Vagina (tissue), 2 donors: ENCODE measurements at regions of chr21 and their contacts with region 1.

Region 1: GRCh38 chr21:38355992-38356797 is 99.4 kb downstream of the KCNJ15 start:
- DNase-seq: peak; percentile 64 to 83
- H3K4me3 ChIP-seq: no peak overlapping the region
- H3K27ac ChIP-seq: no peak overlapping the region
- H3K4me1 ChIP-seq: no peaks in the 10 kb centered on the region
- H3K27me3 ChIP-seq: no peaks in the 10 kb centered on the region
- CTCF ChIP-seq: peak; percentile 86 to 90 (median 88)
- POLR2A ChIP-seq: no peak

Region 2: GRCh38 chr21:38159355-38159754 is 196.8 kb before region 1 on chr21:
- intact Hi-C with region 1: loop called (anchors 10 kb)
- DNase-seq: no peak
- H3K4me3 ChIP-seq: no peak overlapping the region
- H3K27ac ChIP-seq: no peak overlapping the region
- H3K4me1 ChIP-seq: no peaks in the 10 kb centered on the region
- H3K27me3 ChIP-seq: no peaks in the 10 kb centered on the region
- CTCF ChIP-seq: peak in 1 of 3 experiments; percentile 50
- POLR2A ChIP-seq: no peak

Region 3: DNA sequence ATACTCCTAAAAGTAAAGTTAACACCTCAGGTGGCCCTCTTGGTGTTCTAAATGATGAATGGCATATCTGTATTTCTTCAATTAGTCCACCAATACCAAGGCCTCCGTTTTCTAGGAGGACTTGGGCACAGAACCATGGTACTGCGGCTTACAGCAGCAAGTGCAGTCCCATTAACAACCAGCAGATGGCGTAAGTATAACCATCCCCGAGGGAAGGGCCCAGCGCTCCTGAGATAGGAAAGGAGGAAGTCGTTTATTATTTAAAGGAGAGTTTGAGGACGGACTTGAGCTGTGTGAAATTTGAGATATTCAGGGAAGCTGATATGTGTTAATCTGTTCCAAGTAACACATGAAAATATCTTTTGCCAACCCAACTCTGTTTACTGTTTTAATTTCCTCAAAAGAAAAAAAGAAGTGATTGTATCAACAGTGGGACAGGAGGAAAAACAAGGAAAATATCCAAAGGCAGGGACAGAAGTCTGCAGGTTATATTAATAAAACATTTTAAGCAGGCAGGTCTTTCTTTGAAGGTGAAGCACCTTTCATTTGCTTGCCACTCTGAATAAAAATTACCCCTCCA is 137.1 kb before region 1 on chr21:
- intact Hi-C with region 1: loop called (anchors 10 kb)
- DNase-seq: no peak
- H3K4me3 ChIP-seq: no peak overlapping the region
- H3K27ac ChIP-seq: no peak overlapping the region
- H3K4me1 ChIP-seq: no peaks in the 10 kb centered on the region
- H3K27me3 ChIP-seq: no peaks in the 10 kb centered on the region
- CTCF ChIP-seq: peak; percentile 81 to 94 (median 88)
- POLR2A ChIP-seq: no peak